Activated CD8-positive, alpha-beta memory T cell treated with anti-CD3 and anti-CD28 coated beads, Interleukin-2, amount 10 ng/mL, durations not matched to agents 7 days and 5 days (primary cell): ENCODE measurements at regions of chr20 and their contacts with region 1.

Region 1: DNA sequence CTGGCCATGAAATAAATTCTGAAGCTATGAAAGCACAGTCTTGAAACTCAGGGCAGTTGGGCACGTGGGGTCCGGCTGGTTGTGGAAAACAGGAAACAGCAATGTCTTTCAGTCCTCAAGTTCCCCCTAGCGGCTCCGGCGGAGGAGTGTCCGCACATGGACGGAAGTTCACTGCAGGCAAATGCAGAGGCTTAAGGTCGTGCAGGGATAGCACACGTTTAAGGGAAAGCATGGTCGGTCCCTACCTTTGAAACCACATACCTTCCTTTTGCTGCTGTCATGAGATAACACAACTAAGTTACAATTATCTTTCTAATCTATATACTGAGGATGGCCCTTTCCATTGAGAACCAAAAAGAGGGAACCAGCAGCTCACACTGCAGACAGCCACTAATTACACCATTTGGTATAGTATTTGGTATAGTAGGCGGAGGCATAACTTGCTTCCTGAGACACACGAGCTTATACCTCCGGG is 52.6 kb upstream of the NFATC2 start:
- DNase-seq: peak; percentile 91
- ATAC-seq: peak; percentile 99
- H3K4me3 Mint-ChIP-seq: no peak overlapping the region
- H3K27ac Mint-ChIP-seq: peak overlapping the region; percentile 75
- H3K4me1 Mint-ChIP-seq: peaks cover 30% of the 10 kb centered on the region
- H3K27me3 Mint-ChIP-seq: peaks cover 17% of the 10 kb centered on the region

Region 2: DNA sequence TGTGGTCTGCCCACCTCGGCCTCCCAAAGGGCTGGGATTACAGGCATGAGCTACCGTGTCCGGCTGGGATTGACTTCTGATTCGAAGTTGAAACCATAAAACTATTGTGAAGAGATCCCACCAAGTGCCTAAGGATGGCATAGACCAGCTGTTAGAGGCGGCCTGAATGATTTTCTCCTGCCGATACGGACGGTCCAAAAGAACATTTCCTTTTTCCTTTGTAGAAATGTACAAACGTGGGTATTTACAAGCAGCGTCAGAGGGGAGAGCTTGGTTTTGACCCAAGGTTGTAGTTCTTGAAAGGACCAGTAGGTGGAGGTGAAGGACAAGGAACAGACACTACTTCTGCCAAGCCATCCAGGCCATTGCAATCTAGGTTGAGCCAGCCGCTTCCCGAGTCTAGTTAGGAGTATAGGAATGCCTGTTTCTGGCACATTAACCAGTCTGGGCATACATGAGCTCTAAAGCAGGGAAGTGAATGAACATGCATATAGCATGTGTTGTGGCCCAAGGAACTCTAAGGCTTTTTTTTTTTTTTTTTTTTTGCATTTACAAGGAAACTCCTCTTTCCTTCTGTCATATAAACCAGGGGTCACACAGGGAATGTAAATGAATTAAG is 607.4 kb before region 1 on chr20:
- CTCF ChIA-PET with region 1: interaction called, 12 read pairs
- DNase-seq: peak; percentile 71
- ATAC-seq: peak; percentile 93
- H3K4me3 Mint-ChIP-seq: no peak overlapping the region
- H3K27ac Mint-ChIP-seq: no peak overlapping the region
- H3K4me1 Mint-ChIP-seq: peaks cover 4% of the 10 kb centered on the region
- H3K27me3 Mint-ChIP-seq: peaks cover 40% of the 10 kb centered on the region

Region 3: DNA sequence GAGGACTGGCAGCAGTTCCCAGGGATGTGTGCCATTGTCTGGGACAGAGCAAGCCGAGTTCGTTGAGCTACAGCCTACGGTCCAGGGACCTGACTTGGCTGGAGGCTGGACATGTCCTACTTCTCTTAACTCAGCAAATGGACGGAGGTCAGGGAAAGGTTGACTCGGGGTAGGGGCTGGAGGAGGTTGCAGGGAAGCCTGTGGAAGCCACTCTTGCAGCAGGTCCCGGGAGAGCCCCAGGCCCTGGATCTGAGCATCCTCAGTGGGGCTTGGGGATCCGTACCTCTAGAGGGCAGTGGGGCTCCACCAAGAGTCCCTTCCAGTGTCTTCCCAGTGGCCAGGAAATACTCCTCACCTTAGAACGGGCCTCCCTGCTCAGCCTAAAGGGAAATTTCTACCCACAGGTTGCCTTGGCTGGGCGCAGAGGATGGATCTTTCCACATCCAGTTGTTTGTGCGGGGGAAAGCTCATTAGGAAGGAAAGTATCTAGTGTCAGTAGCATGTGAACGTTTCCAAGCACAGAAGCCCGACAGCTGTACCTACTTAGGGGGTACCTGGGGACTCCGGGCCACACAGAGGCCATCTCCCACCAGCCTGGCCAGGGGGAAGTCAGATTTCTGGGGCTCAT is 222.8 kb before region 1 on chr20:
- CTCF ChIA-PET with region 1: interaction called, 46 read pairs
- DNase-seq: peak; percentile 68
- ATAC-seq: peak; percentile 85
- H3K4me3 Mint-ChIP-seq: no peak overlapping the region
- H3K27ac Mint-ChIP-seq: no peak overlapping the region
- H3K4me1 Mint-ChIP-seq: peaks cover 25% of the 10 kb centered on the region
- H3K27me3 Mint-ChIP-seq: no peaks in the 10 kb centered on the region

Region 4: GRCh38 chr20:51378171-51378929 is 216.7 kb before region 1 on chr20:
- CTCF ChIA-PET with region 1: interaction called, 46 read pairs
- DNase-seq: no peak
- ATAC-seq: no peak
- H3K4me3 Mint-ChIP-seq: no peak overlapping the region
- H3K27ac Mint-ChIP-seq: no peak overlapping the region
- H3K4me1 Mint-ChIP-seq: peaks cover 13% of the 10 kb centered on the region
- H3K27me3 Mint-ChIP-seq: no peaks in the 10 kb centered on the region

Region 5: GRCh38 chr20:51541189-51542032 is 53.7 kb before region 1 on chr20:
- CTCF ChIA-PET with region 1: interaction called, 26 read pairs
- DNase-seq: peak; percentile 93
- ATAC-seq: peak; percentile 79
- H3K4me3 Mint-ChIP-seq: peak overlapping the region; percentile 97
- H3K27ac Mint-ChIP-seq: peak overlapping the region; percentile 99
- H3K4me1 Mint-ChIP-seq: peaks cover 52% of the 10 kb centered on the region
- H3K27me3 Mint-ChIP-seq: peaks cover 29% of the 10 kb centered on the region

Region 6: GRCh38 chr20:51624157-51624731 is 29.1 kb after region 1 on chr20:
- CTCF ChIA-PET with region 1: interaction called, 19 read pairs
- DNase-seq: peak; percentile 77
- ATAC-seq: peak; percentile 71
- H3K4me3 Mint-ChIP-seq: no peak overlapping the region
- H3K27ac Mint-ChIP-seq: no peak overlapping the region
- H3K4me1 Mint-ChIP-seq: peaks cover 22% of the 10 kb centered on the region
- H3K27me3 Mint-ChIP-seq: peaks cover 4% of the 10 kb centered on the region